Activated naive CD4-positive, alpha-beta T cell treated with anti-CD3 and anti-CD28 coated beads, Interleukin-2, amount 10 ng/mL, durations not matched to agents 7 days and 5 days (primary cell): ENCODE measurements at regions of chr11 and their contacts with region 1.

Region 1: DNA sequence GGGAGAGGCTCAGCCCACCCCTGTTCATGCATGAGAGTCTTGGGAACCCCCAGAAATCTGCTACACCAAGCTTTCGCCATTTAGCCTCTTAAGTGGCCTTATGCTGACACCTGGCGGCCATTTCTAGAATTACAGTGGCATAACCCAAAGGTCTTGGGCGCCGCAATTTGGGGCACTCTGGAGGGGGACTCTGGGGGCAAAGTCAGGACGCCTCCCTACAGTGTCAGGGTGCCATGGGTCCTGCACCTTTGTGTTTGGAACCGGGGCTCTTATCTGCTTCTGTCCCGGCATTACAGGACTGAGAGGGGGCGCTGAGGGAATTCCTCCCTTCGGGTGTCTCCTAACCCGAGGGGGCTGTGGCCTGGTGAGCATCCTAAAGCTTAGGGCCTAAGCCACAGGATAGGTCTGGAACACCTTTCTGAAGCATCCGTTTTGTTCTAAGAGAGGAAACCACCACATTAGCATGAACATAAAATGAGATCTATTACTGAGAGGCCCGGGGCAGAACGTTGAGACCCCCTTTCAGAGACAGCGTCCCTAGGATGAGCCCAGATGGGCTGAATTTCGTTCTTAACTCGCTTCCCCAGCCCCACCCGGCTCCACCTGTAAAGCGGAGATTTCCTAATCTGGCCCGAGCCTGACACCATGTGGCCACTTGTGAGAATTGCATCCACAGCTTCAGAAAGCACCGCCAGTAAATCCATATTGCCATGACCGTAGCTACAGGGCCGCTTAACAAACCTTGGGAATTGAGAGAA is 9.3 kb downstream of the INS start:
- DNase-seq: peak; percentile 87
- H3K4me3 Mint-ChIP-seq: no peak overlapping the region
- H3K27ac Mint-ChIP-seq: no peak overlapping the region
- H3K4me1 Mint-ChIP-seq: peaks cover 6% of the 10 kb centered on the region
- H3K27me3 Mint-ChIP-seq: peaks cover 63% of the 10 kb centered on the region

Region 2: DNA sequence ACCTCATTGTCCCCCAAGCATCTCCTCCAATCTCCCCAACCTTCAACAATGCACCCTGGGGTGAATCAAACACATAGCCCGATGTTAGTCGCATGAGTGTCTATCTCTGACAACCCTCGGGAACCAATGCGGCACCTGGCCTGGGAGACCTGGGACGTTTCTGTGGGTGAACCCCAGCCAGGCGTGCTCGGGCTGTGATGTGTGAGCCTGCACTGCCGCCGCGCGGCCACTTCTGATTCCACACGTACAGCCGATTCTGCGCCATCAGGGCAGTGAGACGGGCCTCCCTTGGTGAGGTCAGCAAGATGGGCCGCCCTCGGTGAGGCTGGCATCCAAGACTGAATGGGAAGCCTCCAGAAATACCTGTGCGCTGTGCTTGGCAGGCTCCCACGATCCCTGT is 148.9 kb before region 1 on chr11:
- CTCF ChIA-PET with region 1: interaction called, 25 read pairs
- DNase-seq: no peak
- H3K4me3 Mint-ChIP-seq: no peak overlapping the region
- H3K27ac Mint-ChIP-seq: no peak overlapping the region
- H3K4me1 Mint-ChIP-seq: no peaks in the 10 kb centered on the region
- H3K27me3 Mint-ChIP-seq: no peaks in the 10 kb centered on the region

Region 3: DNA sequence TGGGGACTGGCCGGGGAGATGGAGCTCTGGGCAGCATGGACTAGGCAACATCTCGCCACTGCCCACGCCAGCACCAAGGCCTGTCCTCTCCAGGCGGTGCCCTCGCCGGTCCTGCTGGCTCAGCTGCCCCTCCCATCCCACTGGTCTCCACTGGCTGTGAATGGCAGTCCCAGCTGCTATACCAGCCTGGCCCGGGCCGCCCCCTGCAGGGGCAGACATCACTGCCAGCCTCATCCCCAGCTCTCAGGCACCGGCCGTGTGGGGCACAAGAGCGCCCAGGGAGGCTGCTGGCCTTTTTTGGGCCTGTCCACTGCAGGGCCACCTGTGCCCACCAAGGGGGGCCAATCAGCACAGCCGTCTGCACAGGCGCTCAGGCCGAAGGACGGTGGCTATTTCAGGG is 124.0 kb before region 1 on chr11:
- CTCF ChIA-PET with region 1: interaction called, 333 read pairs
- DNase-seq: no peak
- H3K4me3 Mint-ChIP-seq: no peak overlapping the region
- H3K27ac Mint-ChIP-seq: no peak overlapping the region
- H3K4me1 Mint-ChIP-seq: no peaks in the 10 kb centered on the region
- H3K27me3 Mint-ChIP-seq: no peaks in the 10 kb centered on the region

Region 4: GRCh38 chr11:2036863-2037486 is 114.7 kb before region 1 on chr11:
- CTCF ChIA-PET with region 1: interaction called, 333 read pairs
- DNase-seq: no peak
- H3K4me3 Mint-ChIP-seq: no peak overlapping the region
- H3K27ac Mint-ChIP-seq: no peak overlapping the region
- H3K4me1 Mint-ChIP-seq: no peaks in the 10 kb centered on the region
- H3K27me3 Mint-ChIP-seq: no peaks in the 10 kb centered on the region